GM13976 (cell line): ENCODE measurements at regions of chr6 and their contacts with region 1.

Region 1: GRCh38 chr6:12275087-12275486 is 15.1 kb upstream of the EDN1 start:
- DNase-seq: no peak
- CTCF ChIP-seq: no peak

Region 2: DNA sequence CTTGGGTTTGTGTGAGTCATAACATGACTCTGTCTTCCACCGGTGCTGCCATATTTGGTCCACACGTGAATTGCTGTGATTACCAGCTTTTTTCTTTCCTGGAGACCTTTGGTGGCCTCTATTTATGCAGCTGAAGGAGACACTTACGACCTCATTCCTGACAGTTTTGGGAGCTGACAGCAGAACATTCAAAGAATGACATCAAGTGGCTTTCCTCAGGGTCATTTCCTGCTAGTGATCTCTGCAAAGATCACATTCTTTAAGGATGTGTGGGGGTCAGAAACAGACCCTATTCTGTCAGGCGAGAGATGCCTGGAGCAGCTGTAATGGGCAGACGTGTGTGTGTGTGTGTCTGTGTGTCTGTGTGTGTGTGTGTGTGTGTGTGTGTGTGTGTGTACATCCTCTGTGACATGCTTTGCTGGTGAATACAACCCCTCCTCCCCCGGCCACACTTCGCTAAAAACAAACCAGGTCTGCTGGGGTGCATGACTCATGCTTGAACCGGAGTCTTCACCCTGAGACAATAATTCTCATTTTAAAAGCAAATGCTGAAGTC is 622.0 kb before region 1 on chr6:
- in situ Hi-C with region 1: loop called (anchors 10 kb)
- DNase-seq: peak; percentile 55
- CTCF ChIP-seq: no peak

Region 3: DNA sequence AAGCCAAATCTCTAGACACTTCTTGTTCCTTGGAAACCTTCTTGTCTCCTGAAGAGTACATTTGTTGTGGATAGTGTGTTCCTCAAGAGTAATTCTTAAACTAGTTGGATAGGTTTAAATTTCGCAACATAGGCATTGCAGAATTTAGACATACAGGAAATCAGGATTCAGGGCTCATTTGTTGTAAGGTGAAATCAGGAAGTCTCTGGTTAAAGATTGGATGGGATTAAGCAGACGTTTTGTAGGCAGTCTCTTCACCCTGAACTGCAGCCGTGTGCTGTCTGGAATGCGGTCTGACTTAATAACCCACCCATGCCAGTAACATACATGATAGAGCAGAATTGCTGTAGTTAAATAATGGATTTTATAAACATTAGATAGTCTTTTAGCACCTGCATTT is 241.3 kb before region 1 on chr6:
- in situ Hi-C with region 1: no loop called
- DNase-seq: no peak
- CTCF ChIP-seq: no peak

Region 4: GRCh38 chr6:12150812-12151432 is 124.2 kb before region 1 on chr6:
- in situ Hi-C with region 1: loop called (anchors 10 kb)
- DNase-seq: no peak
- CTCF ChIP-seq: peak; percentile 42

Region 5: GRCh38 chr6:12911387-12911960 is 636.4 kb after region 1 on chr6:
- in situ Hi-C with region 1: no loop called
- DNase-seq: peak; percentile 31
- CTCF ChIP-seq: peak; percentile 42